Activated naive CD4-positive, alpha-beta T cell treated with anti-CD3 and anti-CD28 coated beads for 36 hours (primary cell): ENCODE measurements at regions of chrX and their contacts with region 1.

Region 1: DNA sequence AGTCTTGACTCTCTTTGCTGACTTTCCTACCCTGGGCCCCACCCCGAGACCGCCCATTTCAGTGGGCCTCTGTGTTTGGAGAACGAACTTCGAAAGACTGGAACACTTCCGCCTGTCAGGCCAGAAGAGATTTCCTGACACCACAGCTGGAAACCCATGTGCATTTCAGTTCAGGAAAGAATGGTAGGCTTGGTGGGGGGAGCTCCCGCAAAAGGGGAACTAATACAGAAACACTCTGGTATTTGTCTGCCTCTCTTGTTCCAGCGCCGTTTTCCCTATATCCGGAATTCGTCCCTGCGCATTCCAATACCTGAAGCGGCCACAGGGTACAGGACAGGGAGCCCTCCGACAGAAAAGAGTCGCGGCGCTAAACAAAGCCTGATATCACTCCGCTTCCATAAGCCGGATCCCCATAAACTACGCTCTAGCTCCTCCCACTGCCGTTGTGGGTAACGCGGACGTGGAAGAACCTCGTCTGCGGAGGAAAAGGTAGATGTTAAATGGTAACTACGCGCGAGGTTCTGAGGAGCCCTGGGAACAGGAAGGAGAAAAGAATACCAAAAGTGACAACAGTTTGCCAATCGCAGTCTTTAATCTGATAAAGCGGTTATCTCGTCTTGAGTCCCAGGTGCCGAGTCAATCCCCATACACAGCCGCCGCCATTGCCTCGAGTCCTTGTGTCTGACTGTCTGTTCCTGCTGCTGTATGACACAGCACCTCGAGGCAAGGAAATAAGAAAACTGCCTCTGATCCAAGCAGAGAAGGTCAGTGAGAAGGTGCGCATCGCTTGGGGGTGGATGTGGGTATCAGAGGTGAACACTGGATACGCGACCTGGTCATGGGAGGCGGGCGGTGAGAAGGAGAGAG is at the start of gene ARMCX5:
- DNase-seq: peak; percentile 79
- H3K4me3 Mint-ChIP-seq: peak within 1 kb of the TSS; percentile 100
- H3K27ac Mint-ChIP-seq: peak within 1 kb of the TSS; percentile 96
- H3K4me1 Mint-ChIP-seq: peaks cover 33% of the 10 kb centered on the region
- H3K27me3 Mint-ChIP-seq: no peaks in the 10 kb centered on the region
- total RNA-seq, gene ARMCX5: 9.5 to 11.4 TPM

Region 2: GRCh38 chrX:102515975-102516941 is 83.1 kb before region 1 on chrX and contains the start of gene TMSB15A:
- CTCF ChIA-PET with region 1: interaction called, 3 read pairs
- intact Hi-C with region 1: loop called (anchors 5 kb)
- DNase-seq: peak; percentile 65
- H3K4me3 Mint-ChIP-seq: peak within 1 kb of the TSS; percentile 78
- H3K27ac Mint-ChIP-seq: no peak within 1 kb of the TSS
- H3K4me1 Mint-ChIP-seq: peaks cover 3% of the 10 kb centered on the region
- H3K27me3 Mint-ChIP-seq: peaks cover 33% of the 10 kb centered on the region
- total RNA-seq, gene TMSB15A: 1.5 to 2.1 TPM

Region 3: DNA sequence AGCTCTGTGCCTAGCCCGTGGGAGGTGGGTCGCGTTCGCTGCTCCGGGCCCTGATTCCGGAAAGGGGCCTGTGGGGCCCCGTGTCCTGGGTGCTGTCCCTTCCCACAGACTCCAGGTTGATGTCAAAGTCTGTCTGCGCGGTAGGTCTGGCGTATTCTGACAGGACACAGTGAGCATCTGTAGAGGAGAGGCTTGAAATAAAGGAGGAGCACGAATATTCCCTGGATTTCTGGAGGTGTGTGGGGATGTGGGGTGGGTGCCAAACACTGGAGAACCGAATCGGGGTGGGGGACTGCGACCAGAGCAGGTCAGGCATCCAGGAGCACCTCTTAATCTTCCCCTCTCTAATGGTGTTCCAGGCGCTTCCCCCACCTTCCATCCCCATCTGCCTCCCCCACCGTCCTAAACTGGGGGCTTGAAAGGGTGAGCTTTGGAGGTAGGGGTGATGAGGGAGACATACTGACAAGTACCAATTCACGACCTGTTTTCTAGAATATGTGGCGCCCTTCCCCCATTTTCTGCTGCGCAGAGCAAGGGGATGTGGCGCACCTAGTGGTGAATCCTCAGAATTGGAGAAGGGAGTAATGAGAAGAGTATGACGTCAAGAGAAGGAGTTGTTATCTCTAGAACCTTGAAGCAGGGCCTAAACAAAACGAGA is 52.8 kb after region 1 on chrX:
- CTCF ChIA-PET with region 1: no interaction called
- intact Hi-C with region 1: loop called (anchors 1 kb)
- DNase-seq: peak; percentile 70
- H3K4me3 Mint-ChIP-seq: peak overlapping the region; percentile 86
- H3K27ac Mint-ChIP-seq: peak overlapping the region; percentile 81
- H3K4me1 Mint-ChIP-seq: peaks cover 21% of the 10 kb centered on the region
- H3K27me3 Mint-ChIP-seq: no peaks in the 10 kb centered on the region

Region 4: GRCh38 chrX:102768987-102769761 is 169.9 kb after region 1 on chrX:
- CTCF ChIA-PET with region 1: no interaction called
- intact Hi-C with region 1: loop called (anchors 2 kb)
- DNase-seq: peak; percentile 87
- H3K4me3 Mint-ChIP-seq: peak overlapping the region; percentile 96
- H3K27ac Mint-ChIP-seq: peak overlapping the region; percentile 86
- H3K4me1 Mint-ChIP-seq: peaks cover 8% of the 10 kb centered on the region
- H3K27me3 Mint-ChIP-seq: no peaks in the 10 kb centered on the region

Region 5: GRCh38 chrX:102840871-102841705 is 241.8 kb after region 1 on chrX:
- CTCF ChIA-PET with region 1: no interaction called
- intact Hi-C with region 1: no loop called
- DNase-seq: no peak
- H3K4me3 Mint-ChIP-seq: no peak overlapping the region
- H3K27ac Mint-ChIP-seq: no peak overlapping the region
- H3K4me1 Mint-ChIP-seq: no peaks in the 10 kb centered on the region
- H3K27me3 Mint-ChIP-seq: no peaks in the 10 kb centered on the region